PC-3 (cell line): ENCODE measurements at regions of chr15 and their contacts with region 1.

Region 1: DNA sequence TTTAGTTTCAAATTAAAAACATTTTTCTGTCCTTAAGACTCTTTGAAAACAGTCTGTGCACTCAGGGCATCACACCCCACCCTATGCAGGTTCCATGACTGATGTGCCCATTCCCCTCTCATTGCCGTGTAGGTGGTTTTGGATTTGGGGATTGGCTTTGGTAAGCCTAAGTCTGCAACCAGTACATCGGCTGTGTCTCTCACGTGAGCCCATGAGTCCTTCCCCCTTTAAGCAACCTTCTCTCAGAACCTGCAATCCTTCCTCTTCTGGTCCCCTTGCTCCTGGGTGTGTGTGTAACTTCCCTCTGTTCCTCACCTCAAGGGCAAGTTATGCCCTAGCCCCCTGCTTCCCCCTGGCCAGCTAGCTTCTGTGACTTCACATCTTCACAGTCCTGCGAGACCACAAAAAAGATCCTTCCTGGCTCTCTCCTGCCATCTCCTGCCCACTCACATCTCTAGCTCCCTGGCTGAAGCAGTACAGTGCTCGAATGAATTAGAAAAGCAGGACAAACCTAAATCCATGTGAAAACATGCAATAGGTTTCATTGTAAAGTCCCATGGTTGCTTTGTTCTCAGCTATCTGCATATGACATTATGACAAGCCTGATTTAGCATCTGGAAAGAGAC is 126.7 kb downstream of the UACA start:
- DNase-seq: peak; percentile 52
- ATAC-seq: peak; percentile 31; the same call in 1 of the 2 replicates
- H3K4me3 ChIP-seq: no peak overlapping the region
- H3K27ac ChIP-seq: no peak overlapping the region
- H3K4me1 ChIP-seq: peaks cover 24% of the 10 kb centered on the region
- H3K27me3 ChIP-seq: no peaks in the 10 kb centered on the region
- CTCF ChIP-seq: peak; percentile 72

Region 2: DNA sequence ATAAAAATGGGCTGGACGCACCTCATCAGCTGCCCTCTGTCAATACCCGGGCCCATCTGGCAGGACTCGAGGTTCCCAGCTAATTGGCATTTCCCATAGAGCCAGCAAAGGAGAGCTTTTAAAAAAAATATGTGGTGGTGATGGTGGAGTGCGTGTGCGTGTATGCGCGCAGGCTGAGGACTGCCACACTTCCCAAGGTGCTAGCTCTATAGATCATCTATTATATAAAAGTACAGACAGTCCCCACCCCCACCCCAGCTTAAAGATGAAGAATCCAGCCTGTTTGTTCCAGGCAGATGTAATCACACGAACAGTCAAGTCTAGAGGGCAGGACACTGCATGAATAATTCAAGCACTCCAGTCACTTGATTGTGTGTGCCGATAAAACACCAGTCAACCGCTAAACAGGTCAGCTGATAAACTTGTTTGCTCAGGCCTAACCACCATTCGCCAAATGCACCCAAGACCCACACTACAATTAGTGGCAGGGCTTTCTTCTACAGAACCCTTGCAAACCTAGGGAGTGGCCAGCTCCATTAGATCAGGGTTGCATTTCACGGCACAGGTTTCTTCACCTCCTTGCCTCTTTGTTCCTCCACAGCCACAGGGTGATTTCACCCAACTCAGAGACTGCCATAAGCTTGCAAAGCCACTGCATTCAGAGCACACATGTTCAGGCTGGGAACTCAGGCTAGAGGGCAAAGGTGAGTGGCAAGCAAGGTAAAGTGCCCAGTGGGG is 544.8 kb before region 1 on chr15:
- CTCF ChIA-PET with region 1: no interaction called
- POLR2A ChIA-PET with region 1: no interaction called
- intact Hi-C with region 1: loop called (anchors 2 kb)
- DNase-seq: peak; percentile 70
- ATAC-seq: peak; percentile 25
- H3K4me3 ChIP-seq: peak overlapping the region; percentile 98
- H3K27ac ChIP-seq: peak overlapping the region; percentile 86
- H3K4me1 ChIP-seq: peaks cover 44% of the 10 kb centered on the region
- H3K27me3 ChIP-seq: no peaks in the 10 kb centered on the region
- CTCF ChIP-seq: no peak

Region 3: DNA sequence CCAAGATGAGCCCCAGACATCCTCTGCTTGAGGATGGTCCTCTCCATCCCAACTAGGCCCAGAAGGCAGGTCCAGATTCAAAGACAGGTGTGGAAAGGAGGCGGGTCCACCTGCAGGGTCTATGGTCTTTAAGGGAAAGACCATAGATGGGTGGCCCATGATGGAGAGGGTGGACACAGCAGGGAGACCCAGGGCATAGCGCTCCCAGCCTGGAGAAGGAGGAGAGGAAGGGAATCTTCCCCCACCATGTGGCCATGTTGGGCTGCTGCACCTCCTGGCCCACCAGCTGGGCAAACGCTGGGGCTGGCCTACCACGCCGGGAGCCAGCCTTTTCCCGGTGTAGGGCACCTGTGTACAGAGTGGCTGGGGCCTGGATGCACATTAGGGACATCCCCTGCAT is 273.8 kb before region 1 on chr15:
- CTCF ChIA-PET with region 1: no interaction called
- POLR2A ChIA-PET with region 1: no interaction called
- intact Hi-C with region 1: no loop called
- DNase-seq: peak; percentile 24
- ATAC-seq: no peak
- H3K4me3 ChIP-seq: no peak overlapping the region
- H3K27ac ChIP-seq: no peak overlapping the region
- H3K4me1 ChIP-seq: peaks cover 4% of the 10 kb centered on the region
- H3K27me3 ChIP-seq: no peaks in the 10 kb centered on the region
- CTCF ChIP-seq: peak; percentile 58

Region 4: DNA sequence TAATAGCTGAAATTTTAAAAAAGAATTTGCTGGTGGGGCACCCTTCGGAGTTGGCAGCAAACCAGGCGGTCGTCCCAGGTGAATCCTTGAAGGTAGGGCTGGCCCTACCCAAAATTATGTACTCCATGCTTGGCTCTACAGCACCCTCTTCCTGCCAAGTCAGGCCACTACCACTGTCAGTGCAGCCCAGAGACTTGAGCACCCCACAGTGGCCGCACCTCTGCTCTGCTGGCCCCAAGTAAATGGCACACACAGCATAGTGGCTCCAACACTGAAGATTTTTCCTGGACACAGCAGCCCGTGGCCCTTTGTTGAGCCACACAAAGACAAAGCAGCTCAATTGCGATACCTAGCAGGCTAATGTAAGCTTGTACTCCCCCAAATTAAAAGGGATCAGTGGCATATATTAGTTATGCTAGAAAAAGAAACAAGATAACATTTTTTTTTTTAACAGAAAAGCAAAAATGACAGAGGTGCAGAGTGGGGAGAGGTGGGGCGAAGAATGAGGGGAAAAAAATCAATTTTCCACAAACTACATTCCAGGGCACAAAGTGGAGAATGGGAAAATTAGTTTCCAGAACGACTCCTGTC is 123.8 kb before region 1 on chr15:
- CTCF ChIA-PET with region 1: no interaction called
- POLR2A ChIA-PET with region 1: no interaction called
- intact Hi-C with region 1: loop called (anchors 5 kb)
- DNase-seq: peak; percentile 78
- ATAC-seq: peak; percentile 32
- H3K4me3 ChIP-seq: no peak overlapping the region
- H3K27ac ChIP-seq: no peak overlapping the region
- H3K4me1 ChIP-seq: peaks cover 19% of the 10 kb centered on the region
- H3K27me3 ChIP-seq: no peaks in the 10 kb centered on the region
- CTCF ChIP-seq: peak; percentile 98

Region 5: GRCh38 chr15:70569091-70569621 is 67.5 kb before region 1 on chr15:
- CTCF ChIA-PET with region 1: interaction called, 21 read pairs
- POLR2A ChIA-PET with region 1: no interaction called
- intact Hi-C with region 1: loop called (anchors 1 kb)
- DNase-seq: peak; percentile 54
- ATAC-seq: peak; percentile 91
- H3K4me3 ChIP-seq: no peak overlapping the region
- H3K27ac ChIP-seq: no peak overlapping the region
- H3K4me1 ChIP-seq: peaks cover 10% of the 10 kb centered on the region
- H3K27me3 ChIP-seq: no peaks in the 10 kb centered on the region
- CTCF ChIP-seq: peak; percentile 65